ENCODE measurements at regions of chr7 and their contacts with region 1.

Region 1: GRCh38 chr7:28926871-28927597 is 31.1 kb downstream of the TRIL start:
- DNase-seq: peak; percentile 70 to 74
- H3K4me3 ChIP-seq: peak overlapping the region; percentile 61
- H3K4me3 Mint-ChIP-seq: peak overlapping the region; percentile 80
- H3K27ac Mint-ChIP-seq: peak overlapping the region; percentile 32
- H3K4me1 ChIP-seq: peaks cover 5% of the 10 kb centered on the region
- H3K4me1 Mint-ChIP-seq: peaks cover 17% of the 10 kb centered on the region
- H3K27me3 ChIP-seq: no peaks in the 10 kb centered on the region; the same call in 1 of the 2 replicates
- H3K27me3 Mint-ChIP-seq: no peaks in the 10 kb centered on the region
- CTCF ChIP-seq: peak; percentile 76 to 79

Region 2: DNA sequence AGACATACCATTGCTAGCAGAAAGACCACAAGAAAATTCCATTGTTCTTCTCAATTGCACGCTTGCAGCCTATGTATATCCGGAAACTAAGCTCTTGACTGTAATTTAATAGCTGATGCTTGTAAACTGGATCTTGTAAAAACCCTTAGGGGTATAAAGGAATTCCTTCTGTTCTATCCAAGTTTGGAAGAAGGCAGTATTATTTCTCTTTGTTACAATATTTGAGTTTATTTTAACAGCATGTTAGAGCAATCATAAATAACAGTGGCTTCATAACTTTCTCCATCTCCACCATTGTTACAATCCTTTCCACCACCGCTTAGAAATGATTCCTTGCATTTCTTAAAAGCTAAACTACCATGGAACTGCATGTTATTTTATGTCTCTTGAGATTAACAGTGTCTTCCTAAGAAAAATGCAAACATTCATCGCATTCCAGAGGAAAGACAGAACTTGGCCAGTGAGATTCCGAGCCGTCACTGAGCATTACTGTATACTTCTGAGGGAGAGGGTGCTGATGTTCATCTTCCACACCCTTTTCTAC is 61.4 kb before region 1 on chr7:
- CTCF ChIA-PET with region 1: no interaction called
- POLR2A ChIA-PET with region 1: no interaction called
- intact Hi-C with region 1: no loop called
- DNase-seq: peak; percentile 45 to 51
- H3K4me3 ChIP-seq: no peak overlapping the region
- H3K4me3 Mint-ChIP-seq: peak overlapping the region; percentile 18
- H3K27ac Mint-ChIP-seq: no peak overlapping the region
- H3K4me1 ChIP-seq: peaks cover 15% of the 10 kb centered on the region
- H3K4me1 Mint-ChIP-seq: peaks cover 14% of the 10 kb centered on the region
- H3K27me3 ChIP-seq: no peaks in the 10 kb centered on the region
- H3K27me3 Mint-ChIP-seq: no peaks in the 10 kb centered on the region
- CTCF ChIP-seq: no peak

Region 3: GRCh38 chr7:28955718-28956619 is 28.9 kb after region 1 on chr7:
- CTCF ChIA-PET with region 1: interaction called, 47 read pairs
- POLR2A ChIA-PET with region 1: no interaction called
- intact Hi-C with region 1: loop called (anchors 1 kb)
- DNase-seq: peak; percentile 84 to 89
- H3K4me3 ChIP-seq: peak overlapping the region; percentile 65
- H3K4me3 Mint-ChIP-seq: peak overlapping the region; percentile 73
- H3K27ac Mint-ChIP-seq: no peak overlapping the region
- H3K4me1 ChIP-seq: peaks cover 18% of the 10 kb centered on the region; the same call in 1 of the 2 replicates
- H3K4me1 Mint-ChIP-seq: peaks cover 17% of the 10 kb centered on the region
- H3K27me3 ChIP-seq: no peaks in the 10 kb centered on the region
- H3K27me3 Mint-ChIP-seq: no peaks in the 10 kb centered on the region
- CTCF ChIP-seq: peak; percentile 73 to 81

Region 4: DNA sequence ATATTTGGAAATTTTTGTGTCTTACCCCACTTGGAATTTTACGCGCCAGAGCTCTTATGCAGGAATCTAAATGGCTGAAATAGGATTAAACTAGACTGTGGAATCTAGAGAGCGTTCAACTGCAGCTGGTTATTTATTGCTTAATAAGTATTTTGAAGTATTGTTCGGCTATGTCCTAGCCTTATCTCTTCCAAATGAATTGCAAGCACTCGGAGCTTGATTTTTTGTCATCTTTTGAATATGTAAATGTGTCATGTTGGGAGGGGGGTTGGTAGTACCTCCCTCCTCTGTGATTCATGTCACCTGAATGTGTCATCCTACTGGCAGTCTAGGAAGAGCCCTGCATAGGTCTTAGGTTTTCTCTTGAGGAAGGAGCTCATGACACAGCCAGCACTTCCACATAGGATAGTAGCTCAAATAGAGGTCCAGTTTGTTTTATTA is 53.4 kb after region 1 on chr7:
- CTCF ChIA-PET with region 1: no interaction called
- POLR2A ChIA-PET with region 1: no interaction called
- intact Hi-C with region 1: no loop called
- DNase-seq: no peak
- H3K4me3 ChIP-seq: no peak overlapping the region
- H3K4me3 Mint-ChIP-seq: no peak overlapping the region
- H3K27ac Mint-ChIP-seq: no peak overlapping the region
- H3K4me1 ChIP-seq: peaks cover 5% of the 10 kb centered on the region
- H3K4me1 Mint-ChIP-seq: peaks cover 6% of the 10 kb centered on the region
- H3K27me3 ChIP-seq: no peaks in the 10 kb centered on the region
- H3K27me3 Mint-ChIP-seq: no peaks in the 10 kb centered on the region
- CTCF ChIP-seq: no peak

Region 5: DNA sequence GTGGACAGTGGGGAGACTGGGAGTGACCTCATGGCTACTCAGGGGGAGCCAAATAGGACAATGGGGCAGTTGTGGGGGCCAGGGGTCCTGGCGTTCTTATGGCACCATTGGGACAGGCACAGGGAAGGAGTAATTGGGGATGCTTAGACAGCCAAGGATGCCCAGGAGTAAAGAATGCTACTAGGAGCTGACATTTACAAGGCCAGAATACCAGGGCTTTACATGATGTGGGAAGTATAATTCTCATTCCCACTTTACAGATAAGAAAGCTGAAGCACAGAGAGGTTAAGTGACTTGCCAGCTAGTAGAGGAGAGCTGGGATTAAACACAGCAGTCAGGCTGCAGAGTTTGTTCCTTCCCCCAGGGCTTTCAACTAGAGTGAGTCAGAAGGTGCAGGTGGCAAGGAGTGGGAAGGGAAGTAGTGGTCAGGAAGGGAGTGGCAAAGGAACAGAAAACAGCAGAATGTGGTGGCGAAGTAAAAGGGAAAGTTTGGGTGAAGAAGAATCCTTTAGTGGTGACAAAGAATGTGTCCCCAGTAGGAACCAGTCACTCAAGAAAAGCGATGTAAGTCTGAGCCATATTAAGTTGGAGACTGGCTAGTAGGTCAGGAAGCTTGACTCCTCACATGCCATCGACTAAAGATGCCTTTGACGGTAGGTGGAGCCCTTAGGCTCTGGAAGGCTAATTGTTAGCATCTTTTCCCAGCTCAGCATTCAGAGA is 186.5 kb after region 1 on chr7:
- CTCF ChIA-PET with region 1: interaction called, 22 read pairs
- POLR2A ChIA-PET with region 1: no interaction called
- intact Hi-C with region 1: no loop called
- DNase-seq: peak; percentile 70 to 73
- H3K4me3 ChIP-seq: no peak overlapping the region
- H3K4me3 Mint-ChIP-seq: peak overlapping the region; percentile 30
- H3K27ac Mint-ChIP-seq: peak overlapping the region; percentile 89
- H3K4me1 ChIP-seq: peaks cover 76% of the 10 kb centered on the region
- H3K4me1 Mint-ChIP-seq: peaks cover 59% of the 10 kb centered on the region
- H3K27me3 ChIP-seq: no peaks in the 10 kb centered on the region
- H3K27me3 Mint-ChIP-seq: no peaks in the 10 kb centered on the region
- CTCF ChIP-seq: peak in 1 of 2 experiments; percentile 60

Region 6: GRCh38 chr7:29228289-29229011 is 301.4 kb after region 1 on chr7:
- CTCF ChIA-PET with region 1: no interaction called
- POLR2A ChIA-PET with region 1: no interaction called
- intact Hi-C with region 1: no loop called
- DNase-seq: peak in 1 of 2 experiments; percentile 30
- H3K4me3 ChIP-seq: no peak overlapping the region
- H3K4me3 Mint-ChIP-seq: no peak overlapping the region
- H3K27ac Mint-ChIP-seq: no peak overlapping the region
- H3K4me1 ChIP-seq: peaks cover 17% of the 10 kb centered on the region
- H3K4me1 Mint-ChIP-seq: peaks cover 19% of the 10 kb centered on the region
- H3K27me3 ChIP-seq: no peaks in the 10 kb centered on the region
- H3K27me3 Mint-ChIP-seq: no peaks in the 10 kb centered on the region
- CTCF ChIP-seq: no peak

Region 7: DNA sequence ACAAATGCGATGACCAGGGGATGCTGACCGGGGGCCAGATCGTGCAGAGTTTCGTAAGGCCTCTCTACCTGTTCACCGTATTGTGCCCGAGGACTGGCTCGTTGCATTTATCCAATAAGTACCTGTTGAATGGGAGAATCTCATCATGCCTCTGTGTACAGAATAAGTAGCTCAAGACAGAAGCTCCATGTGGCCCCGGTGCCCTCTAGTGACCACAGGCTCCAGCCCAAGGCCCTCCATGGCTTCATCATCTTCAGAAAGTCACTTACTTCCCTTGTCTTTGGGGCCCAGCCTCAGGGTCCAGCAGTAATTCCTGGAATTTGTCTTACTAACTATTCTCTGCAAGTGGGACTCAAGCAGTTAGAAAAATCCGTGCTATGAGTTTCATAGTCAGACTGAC is 418.6 kb after region 1 on chr7:
- CTCF ChIA-PET with region 1: interaction called, 26 read pairs
- POLR2A ChIA-PET with region 1: no interaction called
- intact Hi-C with region 1: loop called (anchors 1 kb)
- DNase-seq: peak; percentile 63 to 64
- H3K4me3 ChIP-seq: no peak overlapping the region
- H3K4me3 Mint-ChIP-seq: no peak overlapping the region
- H3K27ac Mint-ChIP-seq: no peak overlapping the region
- H3K4me1 ChIP-seq: no peaks in the 10 kb centered on the region; the same call in 1 of the 2 replicates
- H3K4me1 Mint-ChIP-seq: no peaks in the 10 kb centered on the region
- H3K27me3 ChIP-seq: no peaks in the 10 kb centered on the region
- H3K27me3 Mint-ChIP-seq: no peaks in the 10 kb centered on the region
- CTCF ChIP-seq: peak; percentile 55 to 81

Region 8: DNA sequence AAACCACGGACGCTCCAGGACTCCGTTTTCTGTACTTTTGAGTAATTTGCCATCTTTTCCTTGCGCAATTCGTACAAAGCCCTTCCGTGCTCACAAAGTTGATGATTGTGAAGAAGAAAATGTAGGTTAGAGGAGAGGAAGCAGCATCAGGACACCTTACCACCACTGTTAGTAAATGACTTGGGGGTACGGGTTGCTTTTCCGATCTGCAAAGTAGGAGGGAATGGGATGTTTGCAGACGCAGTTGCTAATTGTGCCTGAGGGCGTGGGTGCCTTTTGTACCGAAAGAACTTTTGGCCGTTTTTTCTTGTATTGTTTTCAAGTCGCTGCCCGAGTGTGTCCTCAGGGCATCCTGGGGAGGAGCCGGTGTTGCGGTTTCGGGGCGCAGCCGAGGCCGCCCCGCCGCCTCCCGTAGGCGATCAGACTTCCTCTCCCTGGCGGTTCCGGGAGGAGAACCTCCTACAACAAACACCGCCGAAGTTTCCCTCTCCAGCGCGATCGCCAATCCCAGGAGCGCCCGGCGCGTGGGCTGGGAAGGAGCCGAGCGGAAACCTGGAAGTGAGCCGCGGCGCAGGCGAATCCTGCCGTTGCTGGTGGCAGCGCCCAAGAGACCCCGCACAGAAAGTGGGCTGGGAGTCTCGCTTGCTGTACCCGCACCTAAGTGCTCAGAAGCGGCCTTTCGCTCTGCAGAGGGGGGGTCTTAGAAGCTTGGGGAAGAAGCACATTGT is 637.6 kb after region 1 on chr7:
- CTCF ChIA-PET with region 1: no interaction called
- POLR2A ChIA-PET with region 1: no interaction called
- intact Hi-C with region 1: loop called (anchors 10 kb)
- DNase-seq: peak; percentile 62 to 63
- H3K4me3 ChIP-seq: peak overlapping the region; percentile 71
- H3K4me3 Mint-ChIP-seq: peak overlapping the region; percentile 98
- H3K27ac Mint-ChIP-seq: peak overlapping the region; percentile 93
- H3K4me1 ChIP-seq: peaks cover 23% of the 10 kb centered on the region
- H3K4me1 Mint-ChIP-seq: peaks cover 6% of the 10 kb centered on the region
- H3K27me3 ChIP-seq: no peaks in the 10 kb centered on the region
- H3K27me3 Mint-ChIP-seq: no peaks in the 10 kb centered on the region
- CTCF ChIP-seq: no peak